SK-N-SH (cell line): ENCODE measurements at regions of chr16 and their contacts with region 1.

Region 1: DNA sequence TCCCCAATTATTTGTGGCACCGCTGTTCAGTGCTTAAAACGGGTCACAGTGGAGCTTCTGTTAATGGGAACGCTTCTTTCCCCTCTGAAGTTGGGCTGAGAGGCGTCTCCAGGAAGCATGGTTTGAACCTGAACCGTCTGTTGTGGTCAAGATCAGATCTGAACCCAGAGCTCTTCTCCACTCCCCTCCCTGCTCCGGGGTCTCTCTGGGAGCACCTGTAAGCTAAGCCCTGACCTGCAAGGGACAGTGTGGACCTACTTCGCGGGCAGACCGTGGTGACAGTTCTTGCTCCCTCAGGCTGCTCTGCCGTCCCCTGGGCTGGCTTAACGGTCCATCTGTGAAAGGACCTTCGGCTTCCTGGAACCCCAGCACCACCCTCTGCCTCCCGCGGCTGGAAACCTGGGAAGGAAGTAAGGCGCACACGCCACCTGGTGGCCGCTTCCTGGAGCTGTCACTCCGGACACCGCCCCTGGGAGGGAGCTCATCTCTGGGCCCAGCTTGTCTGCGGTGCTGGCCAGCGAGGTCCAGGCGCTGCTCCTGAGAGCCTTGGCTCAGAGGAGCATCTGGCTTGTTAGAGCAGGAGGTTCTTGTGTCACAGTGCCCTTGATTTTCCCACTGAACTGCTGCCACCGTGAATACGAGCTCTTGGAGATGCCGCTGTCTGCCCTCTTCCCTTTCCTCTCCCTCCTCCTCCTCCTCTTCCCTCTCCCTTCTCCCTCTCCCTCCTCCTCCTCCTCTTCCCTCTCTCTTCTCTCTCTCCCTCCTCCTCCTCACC is 518.5 kb upstream of the EEF2KMT start:
- DNase-seq: peak; percentile 84
- H3K4me3 ChIP-seq: peak overlapping the region in 1 of 2 experiments; percentile 47; a peak in 2 of 4 replicates
- H3K27ac ChIP-seq: peak overlapping the region in 1 of 2 experiments; percentile 96; a peak in 2 of 4 replicates
- H3K4me1 ChIP-seq: peaks cover 0 to 53% of the 10 kb centered on the region in 2 experiments; a peak in 2 of 4 replicates
- H3K27me3 ChIP-seq: no peaks in the 10 kb centered on the region
- CTCF ChIP-seq: peak; percentile 41
- EP300 ChIP-seq: peak in 1 of 2 experiments; percentile 41; a peak in 1 of 4 replicates
- RAD21 ChIP-seq: peak; percentile 76

Region 2: GRCh38 chr16:5412728-5413127 is 203.3 kb before region 1 on chr16:
- CTCF ChIA-PET with region 1: interaction called, 12 read pairs
- POLR2A ChIA-PET with region 1: no interaction called
- DNase-seq: peak; percentile 50
- H3K4me3 ChIP-seq: no peak overlapping the region
- H3K27ac ChIP-seq: no peak overlapping the region
- H3K4me1 ChIP-seq: peaks cover 0 to 5% of the 10 kb centered on the region in 2 experiments; a peak in 1 of 4 replicates
- H3K27me3 ChIP-seq: no peaks in the 10 kb centered on the region
- CTCF ChIP-seq: no peak
- EP300 ChIP-seq: no peak
- RAD21 ChIP-seq: peak; percentile 76

Region 3: GRCh38 chr16:5502467-5502869 is 113.6 kb before region 1 on chr16:
- CTCF ChIA-PET with region 1: interaction called, 138 read pairs
- POLR2A ChIA-PET with region 1: interaction called, 57 read pairs
- DNase-seq: peak; percentile 76
- H3K4me3 ChIP-seq: no peak overlapping the region
- H3K27ac ChIP-seq: peak overlapping the region in 1 of 2 experiments; percentile 100; a peak in 2 of 4 replicates
- H3K4me1 ChIP-seq: peaks cover 0 to 62% of the 10 kb centered on the region in 2 experiments; a peak in 2 of 4 replicates
- H3K27me3 ChIP-seq: no peaks in the 10 kb centered on the region
- CTCF ChIP-seq: 0 out of 2 replicates have a peak, but pooled peaks have one; percentile 8
- EP300 ChIP-seq: peak in 1 of 2 experiments; percentile 100; a peak in 2 of 4 replicates
- RAD21 ChIP-seq: peak; percentile 95

Region 4: DNA sequence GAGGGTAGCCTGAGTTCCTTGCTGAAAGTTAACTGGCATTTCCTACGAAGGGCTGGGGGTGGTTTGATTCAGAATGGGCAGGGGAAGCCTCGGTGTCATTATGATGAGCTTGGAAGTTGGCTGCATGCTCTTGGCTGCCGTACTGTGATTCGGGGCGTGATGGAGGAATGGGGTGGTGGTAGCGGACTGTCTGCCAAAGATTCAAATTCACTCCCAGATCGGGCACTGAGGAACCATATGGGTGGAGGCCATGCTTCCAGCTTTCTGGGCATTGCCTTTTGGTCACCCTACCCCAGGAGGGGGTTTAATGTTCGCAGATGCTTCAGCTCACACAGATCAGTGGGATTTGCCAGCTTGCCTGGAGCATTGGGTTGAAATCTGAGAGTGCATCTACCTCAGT is 25.6 kb before region 1 on chr16:
- CTCF ChIA-PET with region 1: interaction called, 10 read pairs
- POLR2A ChIA-PET with region 1: no interaction called
- DNase-seq: no peak
- H3K4me3 ChIP-seq: no peak overlapping the region
- H3K27ac ChIP-seq: peak overlapping the region in 1 of 2 experiments; percentile 23; a peak in 2 of 4 replicates
- H3K4me1 ChIP-seq: peaks cover 0 to 6% of the 10 kb centered on the region in 2 experiments; a peak in 1 of 4 replicates
- H3K27me3 ChIP-seq: no peaks in the 10 kb centered on the region
- CTCF ChIP-seq: no peak
- EP300 ChIP-seq: no peak
- RAD21 ChIP-seq: no peak